OCI-LY7 (cell line): ENCODE measurements at regions of chr6 and their contacts with region 1.

Region 1: DNA sequence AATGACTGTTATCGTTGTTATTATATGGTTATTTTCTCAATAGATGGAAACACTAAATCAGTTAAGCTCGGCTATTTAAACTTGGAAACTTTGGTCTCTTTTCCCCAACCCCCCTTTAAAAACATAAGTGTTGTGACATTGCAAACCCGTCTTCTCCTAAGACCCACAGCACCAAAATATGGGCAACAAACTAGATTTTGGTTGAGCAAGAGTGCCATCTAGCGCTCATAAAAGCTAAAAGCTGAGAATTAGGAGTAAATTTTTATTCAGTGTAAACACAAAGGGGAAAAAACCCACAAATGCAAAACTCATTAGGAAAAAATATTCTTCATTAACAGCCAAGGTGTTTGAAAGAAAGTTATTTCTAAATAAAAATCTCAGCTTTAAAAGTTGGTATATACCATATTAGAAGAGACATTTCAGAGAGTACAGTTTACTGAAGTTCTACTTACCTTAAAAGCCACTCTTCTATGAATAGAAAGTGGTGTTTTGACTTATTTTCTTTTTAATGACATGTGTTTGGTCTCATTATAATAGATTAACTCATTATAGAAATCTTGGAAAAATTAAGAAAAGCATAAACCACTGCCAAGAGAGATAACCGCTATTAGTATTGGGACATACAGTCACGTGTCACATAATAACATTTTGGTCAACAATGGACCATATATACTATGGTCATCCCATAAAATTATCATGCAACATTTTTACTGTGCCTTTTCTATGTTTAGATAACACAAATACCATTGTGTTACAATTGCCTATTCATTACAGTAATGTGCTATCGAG is 21.1 kb downstream of the SESN1 start:
- DNase-seq: peak; percentile 82
- H3K4me3 ChIP-seq: no peak overlapping the region
- H3K27ac ChIP-seq: no peak overlapping the region
- H3K4me1 ChIP-seq: peaks cover 53% of the 10 kb centered on the region
- CTCF ChIP-seq: peak; percentile 92

Region 2: GRCh38 chr6:108541838-108542759 is 531.4 kb before region 1 on chr6:
- CTCF ChIA-PET with region 1: no interaction called
- POLR2A ChIA-PET with region 1: interaction called, 6 read pairs
- intact Hi-C with region 1: loop called (anchors 1 kb)
- DNase-seq: peak; percentile 93
- H3K4me3 ChIP-seq: peak overlapping the region; percentile 33
- H3K27ac ChIP-seq: peak overlapping the region; percentile 57
- H3K4me1 ChIP-seq: peaks cover 24% of the 10 kb centered on the region
- CTCF ChIP-seq: peak; percentile 98

Region 3: DNA sequence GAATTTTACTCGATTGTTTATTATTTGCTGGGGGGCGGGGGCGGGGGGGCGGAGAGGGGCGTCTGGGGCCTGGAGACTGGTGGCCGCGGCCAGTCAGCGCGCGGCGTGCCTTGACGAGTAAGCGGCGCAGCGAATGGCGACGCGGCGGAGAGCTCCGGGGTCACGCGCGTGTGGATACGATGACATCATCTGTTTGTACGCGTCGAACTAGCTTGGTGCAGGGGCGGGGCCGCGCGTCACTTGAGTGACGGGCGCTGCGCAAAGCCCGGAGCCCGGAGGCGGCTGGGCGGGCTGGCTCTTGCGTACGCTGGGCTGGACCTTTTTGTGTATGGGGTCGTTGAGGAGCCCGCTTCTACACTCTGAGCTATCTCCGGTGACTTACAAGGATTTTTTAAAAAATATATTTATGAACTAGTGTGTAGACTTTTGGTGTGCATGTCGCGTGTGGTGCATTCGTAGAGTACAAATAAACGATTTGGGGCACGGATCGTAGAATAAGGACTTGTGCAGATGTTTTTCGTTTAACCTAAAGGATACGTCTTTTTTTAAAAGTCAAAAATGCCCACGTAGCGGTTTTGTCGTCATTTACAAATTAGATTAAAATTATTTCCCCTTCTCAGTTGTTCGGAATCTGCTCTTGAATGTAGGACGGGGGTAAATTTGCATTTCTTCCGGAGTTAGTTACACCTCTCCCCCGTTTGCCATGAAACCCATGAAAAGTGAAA is 515.0 kb before region 1 on chr6:
- CTCF ChIA-PET with region 1: interaction called, 3 read pairs
- POLR2A ChIA-PET with region 1: interaction called, 3 read pairs
- intact Hi-C with region 1: loop called (anchors 5 kb)
- DNase-seq: peak; percentile 99
- H3K4me3 ChIP-seq: peak overlapping the region; percentile 91
- H3K27ac ChIP-seq: peak overlapping the region; percentile 64
- H3K4me1 ChIP-seq: peaks cover 12% of the 10 kb centered on the region
- CTCF ChIP-seq: 0 out of 2 replicates have a peak, but pooled peaks have one; percentile 3

Region 4: DNA sequence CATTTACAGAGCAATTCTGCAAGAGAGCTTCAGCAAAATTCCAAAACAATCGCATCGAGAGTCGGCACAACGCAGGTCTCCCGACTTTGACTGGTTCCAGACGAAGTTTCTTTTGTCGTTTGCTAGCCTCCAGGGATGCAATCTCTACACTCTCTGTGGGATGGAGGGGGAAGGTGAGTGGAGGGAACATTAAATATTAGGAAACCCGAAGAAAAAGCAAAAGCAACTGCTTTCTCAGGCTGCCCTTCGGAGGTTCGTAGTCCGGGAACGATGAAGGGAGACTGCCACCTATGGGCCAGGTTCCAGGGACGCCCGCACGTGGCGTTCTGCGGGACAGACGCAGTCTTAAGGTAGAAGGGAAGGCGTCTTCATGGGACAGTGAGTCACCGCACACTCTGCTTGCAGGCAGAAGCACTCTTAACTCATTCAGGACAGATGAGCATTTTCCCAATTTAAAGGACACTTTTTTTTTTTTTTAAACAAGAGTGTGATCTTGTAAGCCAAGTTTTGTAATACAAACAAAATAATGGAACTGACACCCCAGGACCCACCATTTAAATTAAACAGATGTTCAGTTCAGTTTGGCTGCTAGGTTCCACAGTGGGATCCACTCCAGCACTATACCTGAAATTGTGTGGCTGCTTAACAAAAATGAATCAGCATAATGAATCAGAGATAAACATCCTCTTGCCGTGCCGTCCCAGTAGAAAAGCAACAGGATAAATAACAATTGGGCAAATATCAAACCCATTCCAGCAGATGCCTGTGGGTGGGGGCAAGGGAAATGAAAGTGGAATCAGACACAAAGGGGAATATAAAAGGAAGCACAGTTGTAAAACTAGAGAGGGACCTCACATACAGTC is 291.1 kb before region 1 on chr6:
- CTCF ChIA-PET with region 1: no interaction called
- POLR2A ChIA-PET with region 1: interaction called, 3 read pairs
- intact Hi-C with region 1: loop called (anchors 2 kb)
- DNase-seq: peak; percentile 80
- H3K4me3 ChIP-seq: peak overlapping the region; percentile 48
- H3K27ac ChIP-seq: no peak overlapping the region
- H3K4me1 ChIP-seq: peaks cover 17% of the 10 kb centered on the region
- CTCF ChIP-seq: peak; percentile 90

Region 5: GRCh38 chr6:108835218-108835850 is 238.2 kb before region 1 on chr6:
- CTCF ChIA-PET with region 1: no interaction called
- POLR2A ChIA-PET with region 1: interaction called, 3 read pairs
- intact Hi-C with region 1: loop called (anchors 1 kb)
- DNase-seq: peak; percentile 81
- H3K4me3 ChIP-seq: no peak overlapping the region
- H3K27ac ChIP-seq: no peak overlapping the region
- H3K4me1 ChIP-seq: peaks cover 17% of the 10 kb centered on the region
- CTCF ChIP-seq: peak; percentile 93

Region 6: GRCh38 chr6:108904741-108905140 is 168.8 kb before region 1 on chr6:
- CTCF ChIA-PET with region 1: no interaction called
- POLR2A ChIA-PET with region 1: interaction called, 4 read pairs
- intact Hi-C with region 1: loop called (anchors 1 kb)
- DNase-seq: peak; percentile 90
- H3K4me3 ChIP-seq: peak overlapping the region; percentile 39
- H3K27ac ChIP-seq: peak overlapping the region; percentile 65
- H3K4me1 ChIP-seq: peaks cover 60% of the 10 kb centered on the region
- CTCF ChIP-seq: no peak

Region 7: GRCh38 chr6:108944707-108945680 is 128.5 kb before region 1 on chr6:
- CTCF ChIA-PET with region 1: no interaction called
- POLR2A ChIA-PET with region 1: interaction called, 3 read pairs
- intact Hi-C with region 1: loop called (anchors 1 kb)
- DNase-seq: no peak
- H3K4me3 ChIP-seq: no peak overlapping the region
- H3K27ac ChIP-seq: no peak overlapping the region
- H3K4me1 ChIP-seq: peaks cover 20% of the 10 kb centered on the region
- CTCF ChIP-seq: no peak

Region 8: GRCh38 chr6:109255946-109256640 is 182.6 kb after region 1 on chr6:
- CTCF ChIA-PET with region 1: no interaction called
- POLR2A ChIA-PET with region 1: no interaction called
- intact Hi-C with region 1: no loop called
- DNase-seq: no peak
- H3K4me3 ChIP-seq: no peak overlapping the region
- H3K27ac ChIP-seq: no peak overlapping the region
- H3K4me1 ChIP-seq: no peaks in the 10 kb centered on the region
- CTCF ChIP-seq: no peak